PC-9 (cell line): ENCODE measurements at regions of chr13 and their contacts with region 1.

Region 1: DNA sequence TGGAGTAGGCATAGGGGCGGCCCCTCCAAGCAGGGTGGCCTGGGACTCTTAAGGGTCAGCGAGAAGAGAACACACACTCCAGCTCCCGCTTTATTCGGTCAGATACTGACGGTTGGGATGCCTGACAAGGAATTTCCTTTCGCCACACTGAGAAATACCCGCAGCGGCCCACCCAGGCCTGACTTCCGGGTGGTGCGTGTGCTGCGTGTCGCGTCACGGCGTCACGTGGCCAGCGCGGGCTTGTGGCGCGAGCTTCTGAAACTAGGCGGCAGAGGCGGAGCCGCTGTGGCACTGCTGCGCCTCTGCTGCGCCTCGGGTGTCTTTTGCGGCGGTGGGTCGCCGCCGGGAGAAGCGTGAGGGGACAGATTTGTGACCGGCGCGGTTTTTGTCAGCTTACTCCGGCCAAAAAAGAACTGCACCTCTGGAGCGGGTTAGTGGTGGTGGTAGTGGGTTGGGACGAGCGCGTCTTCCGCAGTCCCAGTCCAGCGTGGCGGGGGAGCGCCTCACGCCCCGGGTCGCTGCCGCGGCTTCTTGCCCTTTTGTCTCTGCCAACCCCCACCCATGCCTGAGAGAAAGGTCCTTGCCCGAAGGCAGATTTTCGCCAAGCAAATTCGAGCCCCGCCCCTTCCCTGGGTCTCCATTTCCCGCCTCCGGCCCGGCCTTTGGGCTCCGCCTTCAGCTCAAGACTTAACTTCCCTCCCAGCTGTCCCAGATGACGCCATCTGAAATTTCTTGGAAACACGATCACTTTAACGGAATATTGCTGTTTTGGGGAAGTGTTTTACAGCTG is at the starts of genes BRCA2 and ZAR1L:
- DNase-seq: peak; percentile 74 to 80
- H3K4me3 ChIP-seq: peak within 1 kb of the TSS; percentile 95
- H3K27ac ChIP-seq: peak within 1 kb of the TSS; percentile 95
- H3K4me1 ChIP-seq: peaks cover 16% of the 10 kb centered on the region
- H3K27me3 ChIP-seq: no peaks in the 10 kb centered on the region
- CTCF ChIP-seq: no peak
- total RNA-seq, gene BRCA2: 11.4 and 14.5 TPM in 2 replicates
- total RNA-seq, gene ZAR1L: 0.37 and 0.43 TPM in 2 replicates

Region 2: DNA sequence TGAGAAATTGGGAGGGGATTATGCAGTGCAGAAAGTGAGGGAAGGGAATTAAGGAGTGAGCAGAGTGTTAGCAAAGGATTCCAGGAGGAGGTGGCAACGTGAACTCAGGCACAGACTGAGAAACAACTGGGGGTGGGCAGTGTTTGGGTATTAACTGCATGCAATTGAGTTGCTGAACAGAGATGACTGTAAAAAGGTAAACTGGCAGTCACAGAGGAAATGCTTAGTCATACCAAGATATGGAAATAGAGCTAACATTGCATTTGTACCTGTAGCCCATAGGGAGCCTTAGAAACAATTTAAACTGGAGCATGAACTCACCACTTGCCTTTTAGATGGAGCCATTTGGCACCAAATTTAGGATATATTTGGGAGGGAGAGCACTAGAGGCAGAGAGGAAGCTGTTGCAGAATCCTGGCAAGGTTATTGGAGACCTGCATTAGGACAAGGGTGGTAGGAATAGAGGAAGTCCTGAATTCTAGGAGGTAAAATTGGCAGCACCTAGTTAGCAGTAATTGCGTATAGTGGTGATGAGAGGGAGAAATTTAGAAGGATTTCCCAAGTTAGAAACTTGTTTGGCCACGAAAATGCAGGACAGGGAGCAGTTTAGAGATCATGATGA is 384.4 kb before region 1 on chr13:
- CTCF ChIA-PET with region 1: interaction called, 12 read pairs
- POLR2A ChIA-PET with region 1: interaction called, 37 read pairs
- intact Hi-C with region 1: no loop called
- DNase-seq: peak in 1 of 2 experiments; percentile 46
- H3K4me3 ChIP-seq: no peak overlapping the region
- H3K27ac ChIP-seq: peak overlapping the region; percentile 54
- H3K4me1 ChIP-seq: peaks cover 49% of the 10 kb centered on the region
- H3K27me3 ChIP-seq: no peaks in the 10 kb centered on the region
- CTCF ChIP-seq: no peak

Region 3: DNA sequence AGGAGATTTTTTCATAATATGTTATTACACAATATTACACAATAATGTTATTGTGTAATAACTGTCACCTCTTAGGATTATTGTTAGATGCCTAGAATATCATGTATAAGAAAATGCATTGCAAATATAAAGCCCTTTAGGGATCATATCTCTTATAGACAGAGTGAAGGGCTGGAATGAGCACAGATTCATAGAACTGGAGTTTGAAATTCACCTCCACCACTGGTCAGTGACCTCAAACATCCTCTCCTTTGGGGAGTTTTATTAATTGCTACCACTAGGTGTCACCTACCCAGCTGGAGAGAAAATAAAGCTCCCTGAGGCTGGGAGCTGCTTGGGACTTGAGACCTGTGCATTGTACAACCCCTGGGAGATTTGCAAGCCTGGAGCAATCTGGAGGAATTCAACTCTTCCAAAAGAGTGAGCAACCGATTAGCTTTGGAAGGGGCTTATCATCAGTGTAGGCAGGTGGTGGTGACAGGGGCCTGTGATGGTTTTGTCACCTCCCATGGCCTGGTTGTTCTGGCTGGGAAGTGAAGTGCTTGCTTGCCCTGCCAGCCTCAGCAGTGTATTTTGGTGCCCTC is 314.2 kb before region 1 on chr13:
- CTCF ChIA-PET with region 1: no interaction called
- POLR2A ChIA-PET with region 1: interaction called, 3 read pairs
- intact Hi-C with region 1: loop called (anchors 10 kb)
- DNase-seq: peak in 1 of 2 experiments; percentile 56
- H3K4me3 ChIP-seq: no peak overlapping the region
- H3K27ac ChIP-seq: no peak overlapping the region
- H3K4me1 ChIP-seq: peaks cover 34% of the 10 kb centered on the region
- H3K27me3 ChIP-seq: no peaks in the 10 kb centered on the region
- CTCF ChIP-seq: peak; percentile 79

Region 4: GRCh38 chr13:32538621-32539246 is 223.3 kb after region 1 on chr13 and contains the start of gene N4BP2L2:
- CTCF ChIA-PET with region 1: interaction called, 9 read pairs
- POLR2A ChIA-PET with region 1: no interaction called
- intact Hi-C with region 1: loop called (anchors 10 kb)
- DNase-seq: peak; percentile 80 to 91
- H3K4me3 ChIP-seq: peak within 1 kb of the TSS; percentile 70
- H3K27ac ChIP-seq: peak within 1 kb of the TSS; percentile 83
- H3K4me1 ChIP-seq: peaks cover 31% of the 10 kb centered on the region
- H3K27me3 ChIP-seq: no peaks in the 10 kb centered on the region
- CTCF ChIP-seq: peak; percentile 19; the same call in 1 of the 2 replicates
- total RNA-seq, gene N4BP2L2: 63.0 and 81.3 TPM in 2 replicates